ENCODE measurements at regions of chrX and their contacts with region 1.

Region 1: GRCh38 chrX:138128027-138128671 is 562.2 kb downstream of the ZIC3 start:
- H3K4me3 ChIP-seq: no peak overlapping the region
- H3K27ac ChIP-seq: no peak overlapping the region
- H3K4me1 ChIP-seq: no peaks in the 10 kb centered on the region
- CTCF ChIP-seq: 0 out of 2 replicates have a peak, but pooled peaks have one; percentile 26

Region 2: DNA sequence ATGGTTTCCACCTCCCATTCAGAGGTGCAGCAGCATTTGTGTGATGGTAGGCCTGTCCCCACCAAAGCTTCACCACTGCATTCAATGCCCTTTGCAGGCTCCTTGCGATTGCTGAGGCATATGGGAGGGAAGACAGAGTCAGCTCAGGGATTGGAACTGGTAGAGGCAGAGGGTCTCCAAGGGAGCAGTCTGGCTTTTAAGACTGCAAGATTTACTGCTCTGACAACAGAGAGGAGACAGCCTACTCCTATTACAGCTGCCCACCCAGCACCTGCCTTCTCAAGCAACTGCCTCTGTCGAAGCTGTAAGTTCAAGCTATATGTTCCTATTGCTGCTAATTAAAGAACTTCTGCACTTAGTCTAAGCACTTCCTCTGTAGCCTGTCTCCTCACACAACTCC is 101.6 kb after region 1 on chrX:
- CTCF ChIA-PET with region 1: no interaction called
- POLR2A ChIA-PET with region 1: no interaction called
- H3K4me3 ChIP-seq: no peak overlapping the region
- H3K27ac ChIP-seq: no peak overlapping the region
- H3K4me1 ChIP-seq: no peaks in the 10 kb centered on the region
- CTCF ChIP-seq: no peak

Region 3: GRCh38 chrX:138745196-138745595 is 617.0 kb after region 1 on chrX:
- CTCF ChIA-PET with region 1: interaction called, 26 read pairs
- POLR2A ChIA-PET with region 1: no interaction called
- H3K4me3 ChIP-seq: no peak overlapping the region
- H3K27ac ChIP-seq: no peak overlapping the region
- H3K4me1 ChIP-seq: no peaks in the 10 kb centered on the region
- CTCF ChIP-seq: peak; percentile 55